ENCODE measurements at regions of chr2 and their contacts with region 1.

Region 1: GRCh38 chr2:45778720-45779171 is 127.3 kb downstream of the PRKCE start:
- DNase-seq: peak; percentile 51
- H3K4me3 ChIP-seq: no peak overlapping the region
- H3K27ac ChIP-seq: no peak overlapping the region
- H3K4me1 ChIP-seq: no peaks in the 10 kb centered on the region
- H3K27me3 ChIP-seq: no peaks in the 10 kb centered on the region
- CTCF ChIP-seq: peak; percentile 36 to 87 (median 71)
- POLR2A ChIP-seq: no peak

Region 2: DNA sequence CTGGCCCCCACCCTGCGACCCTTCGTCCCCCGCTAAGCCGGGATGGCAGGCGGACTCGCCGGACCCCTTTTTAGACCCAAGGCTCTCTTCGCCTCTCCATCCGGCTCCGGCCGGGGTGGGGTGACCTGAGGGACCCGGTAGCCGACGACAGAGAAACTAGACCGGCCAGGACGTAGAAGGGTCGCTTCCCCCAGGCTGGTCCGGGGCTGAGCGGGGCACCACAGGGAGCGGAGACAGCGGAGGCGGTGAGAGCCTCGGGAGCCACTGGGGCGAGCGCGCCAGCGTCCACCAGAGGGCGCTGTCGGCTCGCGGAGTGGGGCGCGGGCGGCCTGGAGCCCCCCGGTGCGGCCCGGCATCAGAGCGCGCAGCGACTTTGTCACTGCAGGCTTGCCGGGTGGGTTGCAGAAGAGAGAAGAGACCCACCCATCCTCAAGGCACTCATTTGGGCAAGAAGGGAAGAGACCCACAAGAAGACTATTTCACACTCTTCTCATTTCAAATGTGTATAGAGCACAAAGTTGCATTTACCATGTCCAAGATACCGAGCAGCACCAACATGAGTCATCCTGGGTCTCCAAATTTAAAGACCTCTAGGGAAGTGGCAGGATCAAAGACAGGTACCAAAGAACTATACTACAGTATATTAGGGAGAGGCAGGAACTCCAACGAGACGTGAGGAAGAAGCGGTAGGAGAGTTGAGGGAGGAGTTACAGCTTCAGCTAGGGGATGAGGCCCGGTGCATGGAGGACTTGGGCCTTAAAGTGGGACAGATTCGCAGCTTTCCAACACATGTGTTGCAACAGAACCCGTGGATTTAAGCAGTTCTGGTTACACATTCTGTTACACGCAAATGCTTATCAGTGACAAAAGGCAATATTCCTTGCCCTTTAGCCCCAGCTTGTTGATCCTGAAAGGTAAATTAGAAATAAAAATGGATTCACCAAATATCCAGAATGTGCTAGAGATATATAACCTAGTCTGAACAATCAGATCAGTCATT is 134.9 kb before region 1 on chr2:
- intact Hi-C with region 1: loop called (anchors 2 kb)
- DNase-seq: peak; percentile 32
- H3K4me3 ChIP-seq: peak overlapping the region; percentile 39 to 41
- H3K27ac ChIP-seq: no peak overlapping the region
- H3K4me1 ChIP-seq: no peaks in the 10 kb centered on the region
- H3K27me3 ChIP-seq: no peaks in the 10 kb centered on the region
- CTCF ChIP-seq: peak; percentile 93 to 99 (median 98)
- POLR2A ChIP-seq: no peak

Region 3: GRCh38 chr2:45650851-45651414 is 127.8 kb before region 1 on chr2:
- intact Hi-C with region 1: loop called (anchors 2 kb)
- DNase-seq: peak; percentile 95
- H3K4me3 ChIP-seq: peak overlapping the region; percentile 91 to 98
- H3K27ac ChIP-seq: peak overlapping the region; percentile 98 to 100
- H3K4me1 ChIP-seq: peaks cover 10% of the 10 kb centered on the region
- H3K27me3 ChIP-seq: no peaks in the 10 kb centered on the region
- CTCF ChIP-seq: peak in 3 of 4 experiments; percentile 22 to 73 (median 55)
- POLR2A ChIP-seq: peak; percentile 91

Region 4: GRCh38 chr2:45935791-45936622 is 157.3 kb after region 1 on chr2:
- intact Hi-C with region 1: loop called (anchors 5 kb)
- DNase-seq: peak; percentile 91
- H3K4me3 ChIP-seq: no peak overlapping the region
- H3K27ac ChIP-seq: peak overlapping the region in 1 of 2 donors; percentile 20
- H3K4me1 ChIP-seq: peaks cover 3% of the 10 kb centered on the region
- H3K27me3 ChIP-seq: no peaks in the 10 kb centered on the region
- CTCF ChIP-seq: peak; percentile 35 to 92 (median 81)
- POLR2A ChIP-seq: no peak

Region 5: DNA sequence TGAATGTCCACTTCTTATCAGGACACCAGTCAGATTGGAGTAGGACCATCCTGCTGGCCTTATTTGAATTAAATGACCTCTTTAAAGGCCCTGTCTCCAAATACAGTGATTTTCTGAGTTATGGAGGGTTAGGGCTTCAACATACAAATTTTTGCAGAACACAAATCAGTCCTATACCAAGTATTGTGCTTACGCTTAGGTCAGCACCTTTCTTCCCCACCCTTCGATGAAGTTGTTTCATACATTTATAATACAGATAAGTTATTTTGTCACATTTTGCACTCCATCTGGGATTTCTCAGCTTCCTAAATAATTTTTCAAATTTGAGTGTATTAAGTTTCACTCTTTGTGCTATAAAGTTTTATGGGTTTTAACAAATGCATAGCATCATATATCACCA is 327.9 kb after region 1 on chr2:
- intact Hi-C with region 1: no loop called
- DNase-seq: no peak
- H3K4me3 ChIP-seq: no peak overlapping the region
- H3K27ac ChIP-seq: no peak overlapping the region
- H3K4me1 ChIP-seq: no peaks in the 10 kb centered on the region
- H3K27me3 ChIP-seq: no peaks in the 10 kb centered on the region
- CTCF ChIP-seq: no peak
- POLR2A ChIP-seq: no peak